IMR-90 (cell line): ENCODE measurements at regions of chr1 and their contacts with region 1.

Region 1: GRCh38 chr1:226332947-226333346 is 24.0 kb upstream of the LIN9 start:
- DNase-seq: no peak
- ATAC-seq: no peak
- H3K4me3 ChIP-seq: no peak overlapping the region
- H3K27ac ChIP-seq: no peak overlapping the region
- H3K4me1 ChIP-seq: no peaks in the 10 kb centered on the region
- H3K27me3 ChIP-seq: no peaks in the 10 kb centered on the region
- CTCF ChIP-seq: no peak
- POLR2A ChIP-seq: no peak
- RAD21 ChIP-seq: no peak

Region 2: GRCh38 chr1:226201029-226201593 is 131.8 kb before region 1 on chr1:
- CTCF ChIA-PET with region 1: interaction called, 4 read pairs
- POLR2A ChIA-PET with region 1: no interaction called
- dilution Hi-C with region 1: no loop called
- in situ Hi-C with region 1: no loop called
- intact Hi-C with region 1: loop called (anchors 10 kb)
- DNase-seq: peak; percentile 9
- ATAC-seq: 0 out of 2 replicates have a peak, but pooled peaks have one; percentile 50
- H3K4me3 ChIP-seq: no peak overlapping the region
- H3K27ac ChIP-seq: no peak overlapping the region
- H3K4me1 ChIP-seq: no peaks in the 10 kb centered on the region
- H3K27me3 ChIP-seq: peaks cover 4% of the 10 kb centered on the region; the same call in 1 of the 2 replicates
- CTCF ChIP-seq: peak; percentile 38
- POLR2A ChIP-seq: no peak
- RAD21 ChIP-seq: peak; percentile 20; the same call in 1 of the 2 replicates

Region 3: DNA sequence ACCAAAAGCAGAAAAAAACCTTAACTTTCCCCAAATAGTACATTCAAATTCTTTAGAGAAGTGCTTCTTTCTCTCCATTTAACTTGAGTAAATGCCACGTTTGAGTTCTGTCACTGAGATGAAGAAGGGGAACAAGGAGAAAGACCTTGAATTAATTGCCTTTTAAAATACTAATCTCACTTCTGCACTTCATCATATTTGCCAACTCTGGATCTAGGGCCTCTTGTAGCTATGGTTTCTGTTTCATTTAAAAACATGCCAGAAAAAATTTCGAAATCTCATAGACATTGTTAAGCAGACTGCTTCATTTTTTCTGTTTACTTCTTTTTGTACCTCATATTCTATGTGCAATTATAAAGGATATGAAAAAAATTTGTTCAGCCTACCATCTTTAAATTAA is 84.9 kb before region 1 on chr1:
- CTCF ChIA-PET with region 1: no interaction called
- POLR2A ChIA-PET with region 1: no interaction called
- dilution Hi-C with region 1: no loop called
- in situ Hi-C with region 1: no loop called
- intact Hi-C with region 1: no loop called
- DNase-seq: peak; percentile 38
- ATAC-seq: peak; percentile 49; the same call in 1 of the 2 replicates
- H3K4me3 ChIP-seq: no peak overlapping the region
- H3K27ac ChIP-seq: no peak overlapping the region
- H3K4me1 ChIP-seq: no peaks in the 10 kb centered on the region
- H3K27me3 ChIP-seq: no peaks in the 10 kb centered on the region
- CTCF ChIP-seq: no peak
- POLR2A ChIP-seq: no peak
- RAD21 ChIP-seq: no peak